Transverse colon (tissue), 4 donors: ENCODE measurements at regions of chr6 and their contacts with region 1.

Region 1: GRCh38 chr6:26285143-26286134 is 79.6 kb upstream of the BTN3A2 start:
- DNase-seq: peak; percentile 99
- H3K4me3 ChIP-seq: peak overlapping the region; percentile 19 to 70 (median 60)
- H3K27ac ChIP-seq: peak overlapping the region; percentile 93 to 98 (median 95)
- H3K4me1 ChIP-seq: peaks cover 0 to 30% (median 6%) of the 10 kb centered on the region in 4 donors
- H3K27me3 ChIP-seq: no peaks in the 10 kb centered on the region
- CTCF ChIP-seq: no peak
- EP300 ChIP-seq: peak; percentile 92
- POLR2A ChIP-seq: peak; percentile 98

Region 2: GRCh38 chr6:26234421-26235296 is 50.8 kb before region 1 on chr6:
- in situ Hi-C with region 1: no loop called
- intact Hi-C with region 1: loop called (anchors 5 kb)
- DNase-seq: peak; percentile 82
- H3K4me3 ChIP-seq: peak overlapping the region; percentile 27 to 79 (median 61)
- H3K27ac ChIP-seq: peak overlapping the region; percentile 87 to 96 (median 93)
- H3K4me1 ChIP-seq: peaks cover 0 to 28% (median 10%) of the 10 kb centered on the region in 4 donors
- H3K27me3 ChIP-seq: peaks cover 23% of the 10 kb centered on the region
- CTCF ChIP-seq: no peak
- EP300 ChIP-seq: peak; percentile 72
- POLR2A ChIP-seq: peak; percentile 99

Region 3: DNA sequence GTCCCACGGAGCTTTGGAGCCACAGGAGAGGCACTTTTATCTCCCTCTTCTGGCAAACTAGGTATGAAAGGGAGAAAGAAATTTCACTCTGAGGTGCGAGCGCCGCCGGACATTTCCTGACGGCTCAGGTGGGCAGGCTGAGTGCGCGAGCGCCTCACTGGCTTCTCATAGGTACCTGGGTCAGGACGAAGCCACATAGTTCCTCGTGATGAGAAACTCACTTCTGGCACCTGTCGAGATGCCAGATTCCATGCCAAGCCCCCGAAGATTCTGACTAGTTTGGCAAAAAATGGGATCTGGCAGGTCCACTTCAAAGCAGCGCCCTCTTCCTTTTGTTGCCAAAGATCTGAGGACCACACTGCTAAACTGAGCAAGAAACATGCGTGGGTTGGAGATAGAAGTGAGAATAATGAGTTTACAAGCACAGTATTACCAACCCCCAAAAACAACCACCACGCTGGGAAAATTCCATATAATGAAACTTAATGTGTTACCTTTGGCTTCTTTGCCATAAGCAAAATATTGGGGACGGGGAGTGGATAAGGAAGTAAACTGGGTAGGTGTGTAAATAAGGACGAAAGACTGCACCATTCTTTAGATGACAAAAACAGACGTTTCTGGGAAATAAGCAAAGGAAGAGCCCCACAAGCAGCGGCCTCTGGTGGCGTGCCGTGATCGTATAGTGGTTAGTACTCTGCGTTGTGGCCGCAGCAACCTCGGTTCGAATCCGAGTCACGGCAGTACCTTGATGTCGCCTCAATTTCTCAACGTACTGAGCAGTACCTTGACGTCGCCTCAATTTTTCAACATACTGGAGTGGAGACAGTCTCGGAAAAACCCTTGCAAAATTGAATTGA is 872.2 kb after region 1 on chr6:
- in situ Hi-C with region 1: loop called in 1 of 4 experiments (anchors 25 kb)
- intact Hi-C with region 1: no loop called
- DNase-seq: peak; percentile 74
- H3K4me3 ChIP-seq: peak overlapping the region; percentile 12 to 51 (median 26)
- H3K27ac ChIP-seq: peak overlapping the region; percentile 8 to 50 (median 28)
- H3K4me1 ChIP-seq: peaks cover 4 to 14% (median 8%) of the 10 kb centered on the region in 4 donors
- H3K27me3 ChIP-seq: no peaks in the 10 kb centered on the region
- CTCF ChIP-seq: peak; percentile 16 to 58 (median 39)
- EP300 ChIP-seq: no peak
- POLR2A ChIP-seq: no peak